ENCODE measurements at regions of chr17 and their contacts with region 1.

Region 1: GRCh38 chr17:73833775-73834488 is 189.7 kb upstream of the SDK2 start:
- DNase-seq: no peak
- ATAC-seq: no peak

Region 2: GRCh38 chr17:73657473-73658116 is 176.3 kb before region 1 on chr17:
- intact Hi-C with region 1: loop called (anchors 10 kb)
- DNase-seq: peak; percentile 73
- ATAC-seq: peak; percentile 79

Region 3: GRCh38 chr17:73855720-73856333 is 21.9 kb after region 1 on chr17:
- intact Hi-C with region 1: no loop called
- DNase-seq: no peak
- ATAC-seq: no peak